ENCODE measurements at regions of chr4 and their contacts with region 1.

Region 1: DNA sequence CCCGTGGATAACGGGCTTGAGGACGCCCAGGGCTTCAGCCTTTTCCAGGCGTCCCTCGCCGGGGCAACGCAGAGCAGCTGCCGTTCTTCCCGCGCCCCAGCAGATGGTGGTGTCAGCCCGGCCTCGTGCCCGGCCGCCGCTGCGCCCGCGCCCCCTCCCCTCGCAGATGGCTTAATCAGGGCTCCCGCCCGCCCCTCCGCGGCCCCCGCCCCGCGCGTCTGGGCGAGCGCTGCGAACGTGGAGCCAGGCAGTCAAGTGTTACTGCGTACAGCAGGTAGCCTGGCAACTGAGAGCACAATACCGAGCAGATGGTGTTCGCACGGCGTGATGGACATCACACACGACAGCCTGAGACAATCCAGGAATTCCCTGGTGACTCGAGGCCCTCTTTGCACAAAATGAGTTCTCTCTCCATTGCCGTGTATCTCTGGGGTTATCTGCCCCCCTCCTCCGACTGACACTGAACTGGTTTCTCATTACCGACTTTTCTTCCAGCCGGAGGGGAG is 69.3 kb downstream of the MGST2 start:
- DNase-seq: peak; percentile 87 to 93
- ATAC-seq: peak; percentile 93 to 97 (median 94)
- H3K4me3 ChIP-seq: peak overlapping the region; percentile 68
- H3K27ac ChIP-seq: peak overlapping the region; percentile 80
- H3K4me1 ChIP-seq: peaks cover 39% of the 10 kb centered on the region
- H3K27me3 ChIP-seq: no peaks in the 10 kb centered on the region
- CTCF ChIP-seq: peak; percentile 89

Region 2: DNA sequence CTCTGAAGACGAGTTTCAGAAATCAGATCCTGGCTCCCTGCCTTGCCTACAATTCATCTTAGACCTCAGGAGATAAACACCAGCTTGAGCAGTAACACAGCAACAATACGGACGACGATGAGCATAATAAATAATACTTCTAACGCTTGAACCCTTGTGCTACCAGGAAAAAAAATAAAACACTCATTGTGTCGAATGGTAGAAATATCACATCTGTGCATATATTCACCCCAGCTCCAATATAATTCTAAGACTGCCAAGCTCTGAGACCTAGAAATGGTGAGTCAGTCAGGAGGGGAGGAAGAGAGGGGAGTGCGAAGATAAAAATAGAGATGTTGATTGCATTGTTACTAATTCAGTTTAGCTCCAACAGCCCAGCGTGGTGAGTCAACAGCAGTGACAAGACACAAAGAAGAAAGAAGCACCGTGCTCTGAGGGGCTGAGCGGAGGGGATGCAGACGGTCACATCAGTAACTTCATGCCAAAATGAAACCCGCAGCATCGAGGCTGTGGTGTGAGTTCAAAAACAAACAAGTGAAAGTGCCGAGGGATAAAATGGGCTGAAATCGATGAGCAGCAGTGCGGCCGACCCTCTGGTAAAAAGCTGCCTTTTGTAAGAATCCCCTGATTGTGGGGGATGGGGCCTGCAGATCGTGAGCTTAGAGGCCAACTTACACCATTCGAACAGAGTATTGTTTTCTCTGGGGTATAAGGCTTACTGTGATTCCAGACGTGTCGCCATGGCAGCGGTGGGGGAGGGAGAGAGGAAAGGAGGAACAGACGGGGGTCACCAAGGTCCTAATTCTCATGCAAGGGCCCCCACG is 81.1 kb after region 1 on chr4:
- intact Hi-C with region 1: loop called in 1 of 2 experiments (anchors 5 kb)
- DNase-seq: peak; percentile 56 to 78
- ATAC-seq: peak; percentile 90 to 93 (median 92)
- H3K4me3 ChIP-seq: peak overlapping the region; percentile 65
- H3K27ac ChIP-seq: peak overlapping the region; percentile 87
- H3K4me1 ChIP-seq: peaks cover 36% of the 10 kb centered on the region
- H3K27me3 ChIP-seq: no peaks in the 10 kb centered on the region
- CTCF ChIP-seq: no peak

Region 3: DNA sequence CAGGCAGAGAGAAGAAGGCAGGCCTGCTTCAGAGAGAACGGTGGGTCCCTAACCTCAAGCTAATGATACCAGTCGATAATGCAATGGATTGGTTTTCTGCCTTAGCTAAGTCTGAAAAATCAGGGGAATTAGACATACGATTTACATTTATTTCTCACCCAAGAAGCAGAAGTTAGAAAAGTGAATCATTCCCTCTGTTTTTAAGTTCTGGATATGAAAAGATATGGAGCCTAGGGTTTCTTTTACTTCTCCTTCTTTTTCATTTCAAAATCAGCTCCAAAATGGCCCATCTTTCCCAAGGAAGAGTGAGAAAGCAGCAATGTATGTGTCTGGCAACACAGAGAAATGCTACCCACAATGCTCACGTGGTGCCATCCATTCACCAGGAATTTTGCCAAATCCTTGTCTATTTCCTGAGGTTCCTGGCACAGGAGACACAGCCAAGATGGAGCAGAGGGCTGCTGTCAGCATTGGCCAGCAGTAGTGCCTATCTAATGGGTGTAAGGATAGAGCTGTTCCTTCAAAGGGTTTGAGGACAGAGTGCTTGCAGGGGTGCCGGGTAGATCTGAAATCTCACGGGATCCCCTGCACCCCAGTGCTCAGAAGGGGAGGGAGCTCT is 187.6 kb after region 1 on chr4:
- intact Hi-C with region 1: loop called in 1 of 2 experiments (anchors 5 kb)
- DNase-seq: no peak
- ATAC-seq: peak in 3 of 4 donors; percentile 27 to 42 (median 29)
- H3K4me3 ChIP-seq: no peak overlapping the region
- H3K27ac ChIP-seq: peak overlapping the region; percentile 73
- H3K4me1 ChIP-seq: peaks cover 46% of the 10 kb centered on the region
- H3K27me3 ChIP-seq: no peaks in the 10 kb centered on the region
- CTCF ChIP-seq: no peak

Region 4: DNA sequence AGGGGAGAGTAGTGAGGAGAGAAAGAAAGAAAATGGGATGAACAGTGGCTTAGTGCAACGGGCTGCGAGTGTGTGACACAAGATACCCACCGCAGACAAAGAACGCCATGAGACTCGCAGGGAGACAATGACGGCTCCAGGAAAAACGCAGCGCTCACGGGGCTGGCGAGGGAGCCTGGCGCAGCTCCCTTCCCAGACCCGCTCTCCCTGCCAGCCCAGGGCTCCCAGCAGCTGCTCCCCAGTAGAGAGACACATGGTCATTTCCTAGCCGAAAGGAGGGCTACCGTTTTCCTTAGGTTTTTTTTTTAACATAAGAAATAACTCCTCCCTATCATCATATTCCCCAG is 269.6 kb after region 1 on chr4:
- intact Hi-C with region 1: loop called in 1 of 2 experiments (anchors 5 kb)
- DNase-seq: peak; percentile 59 to 78
- ATAC-seq: peak; percentile 91 to 98 (median 96)
- H3K4me3 ChIP-seq: peak overlapping the region; percentile 61
- H3K27ac ChIP-seq: peak overlapping the region; percentile 57
- H3K4me1 ChIP-seq: peaks cover 8% of the 10 kb centered on the region
- H3K27me3 ChIP-seq: no peaks in the 10 kb centered on the region
- CTCF ChIP-seq: no peak

Region 5: GRCh38 chr4:140049024-140049848 is 314.3 kb after region 1 on chr4:
- intact Hi-C with region 1: loop called in 1 of 2 experiments (anchors 10 kb)
- DNase-seq: peak in 1 of 2 donors; percentile 21
- ATAC-seq: peak; percentile 46 to 63 (median 58)
- H3K4me3 ChIP-seq: peak overlapping the region; percentile 54
- H3K27ac ChIP-seq: peak overlapping the region; percentile 75
- H3K4me1 ChIP-seq: peaks cover 47% of the 10 kb centered on the region
- H3K27me3 ChIP-seq: no peaks in the 10 kb centered on the region
- CTCF ChIP-seq: no peak

Region 6: GRCh38 chr4:140252742-140253555 is 518.0 kb after region 1 on chr4:
- intact Hi-C with region 1: loop called (anchors 2 to 5 kb)
- DNase-seq: peak; percentile 78 to 83
- ATAC-seq: peak; percentile 82 to 88 (median 86)
- H3K4me3 ChIP-seq: peak overlapping the region; percentile 85
- H3K27ac ChIP-seq: peak overlapping the region; percentile 89
- H3K4me1 ChIP-seq: peaks cover 16% of the 10 kb centered on the region
- H3K27me3 ChIP-seq: no peaks in the 10 kb centered on the region
- CTCF ChIP-seq: peak; percentile 98